ENCODE measurements at regions of chr20 and their contacts with region 1.

Region 1: DNA sequence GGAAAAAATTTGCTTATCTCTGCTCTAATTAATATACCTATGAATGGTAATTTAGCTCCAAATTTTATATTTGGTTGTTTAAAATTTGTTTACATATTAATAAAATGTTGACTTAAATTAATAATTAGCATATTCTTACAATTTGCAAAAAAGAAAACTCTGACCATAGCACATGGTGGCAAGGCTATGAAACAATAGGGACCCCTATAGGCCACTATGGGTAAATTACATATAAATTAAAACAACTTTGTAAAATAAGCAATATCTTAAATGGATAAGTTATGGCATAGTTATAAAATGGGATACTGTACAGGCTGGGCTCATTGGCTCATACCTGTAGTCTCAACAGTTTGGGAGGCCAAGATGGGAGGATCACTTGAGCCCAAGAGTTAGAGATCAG is 76.0 kb downstream of the MKKS start:
- DNase-seq: no peak
- ATAC-seq: no peak
- H3K4me3 ChIP-seq: no peak overlapping the region
- H3K27ac ChIP-seq: no peak overlapping the region
- H3K4me1 ChIP-seq: peaks cover 0 to 15% (median 7%) of the 10 kb centered on the region in 9 donors
- H3K27me3 ChIP-seq: peaks cover 0 to 1% (median 0%) of the 10 kb centered on the region in 7 donors
- CTCF ChIP-seq: peak in 7 of 9 donors; percentile 18 to 46 (median 24)

Region 2: DNA sequence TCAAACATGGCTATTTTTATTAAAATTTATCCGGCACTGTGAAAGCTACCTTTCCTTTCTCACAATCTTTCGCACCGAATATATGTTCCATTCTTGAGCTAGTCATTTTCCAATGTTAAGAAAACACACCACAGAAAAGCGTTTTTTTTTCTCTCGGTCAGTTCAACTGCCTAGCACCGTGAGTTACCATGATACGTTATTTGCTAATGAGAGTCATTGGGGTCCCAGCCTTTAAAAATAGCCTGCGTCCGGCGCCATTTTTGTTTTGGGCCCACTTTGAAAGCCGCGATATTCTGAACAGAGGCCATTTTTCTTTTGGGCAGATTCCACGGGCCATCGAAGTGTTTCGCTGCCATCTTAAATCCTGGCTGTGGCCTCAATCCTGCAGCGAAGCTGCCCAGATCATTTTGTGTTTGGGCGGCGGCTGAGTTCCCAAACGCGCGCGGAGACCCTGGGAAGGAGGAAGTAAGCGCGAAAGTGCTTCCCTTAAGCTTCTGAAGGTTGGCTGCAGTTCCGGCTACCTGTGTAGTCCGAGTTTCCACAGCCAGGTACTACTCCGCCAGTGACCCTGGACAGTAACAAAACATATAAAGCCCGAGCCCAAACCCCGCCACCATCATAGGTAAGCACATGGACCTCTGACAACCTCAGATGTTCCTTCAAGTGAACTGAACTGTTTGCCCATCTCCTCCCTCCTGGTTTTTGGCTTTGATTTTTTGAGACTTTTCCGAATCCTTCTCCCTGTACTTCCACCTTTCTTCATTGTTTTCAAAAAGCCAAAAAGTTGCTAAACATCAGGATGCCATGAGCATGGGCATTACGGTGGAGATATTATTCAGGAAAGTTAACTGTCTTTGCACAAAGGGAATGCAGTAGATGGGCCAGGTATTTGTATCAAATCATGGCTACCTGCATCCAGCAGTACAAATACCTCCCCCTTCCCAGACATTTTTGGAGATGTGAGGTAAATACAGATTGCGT is 77.1 kb after region 1 on chr20 and contains the start of gene SLX4IP:
- intact Hi-C with region 1: loop called in 1 of 10 experiments (anchors 5 kb)
- DNase-seq: peak; percentile 85 to 97
- ATAC-seq: peak; percentile 81 to 92 (median 88)
- H3K4me3 ChIP-seq: peak within 1 kb of the TSS; percentile 51 to 94 (median 86)
- H3K27ac ChIP-seq: peak within 1 kb of the TSS; percentile 54 to 97 (median 94)
- H3K4me1 ChIP-seq: peaks cover 6 to 41% (median 37%) of the 10 kb centered on the region in 9 donors
- H3K27me3 ChIP-seq: no peaks in the 10 kb centered on the region
- CTCF ChIP-seq: no peak
- total RNA-seq, gene SLX4IP: 1.6 to 3.1 (median 2.6) TPM

Region 3: GRCh38 chr20:10469599-10469998 is 111.6 kb after region 1 on chr20:
- intact Hi-C with region 1: no loop called
- DNase-seq: peak in 1 of 2 donors; percentile 61
- ATAC-seq: peak in 7 of 8 donors; percentile 44 to 81 (median 75)
- H3K4me3 ChIP-seq: no peak overlapping the region
- H3K27ac ChIP-seq: peak overlapping the region in 2 of 10 donors; percentile 3 to 29
- H3K4me1 ChIP-seq: peaks cover 0 to 60% (median 51%) of the 10 kb centered on the region in 9 donors
- H3K27me3 ChIP-seq: no peaks in the 10 kb centered on the region
- CTCF ChIP-seq: peak; percentile 38 to 80 (median 69)

Region 4: DNA sequence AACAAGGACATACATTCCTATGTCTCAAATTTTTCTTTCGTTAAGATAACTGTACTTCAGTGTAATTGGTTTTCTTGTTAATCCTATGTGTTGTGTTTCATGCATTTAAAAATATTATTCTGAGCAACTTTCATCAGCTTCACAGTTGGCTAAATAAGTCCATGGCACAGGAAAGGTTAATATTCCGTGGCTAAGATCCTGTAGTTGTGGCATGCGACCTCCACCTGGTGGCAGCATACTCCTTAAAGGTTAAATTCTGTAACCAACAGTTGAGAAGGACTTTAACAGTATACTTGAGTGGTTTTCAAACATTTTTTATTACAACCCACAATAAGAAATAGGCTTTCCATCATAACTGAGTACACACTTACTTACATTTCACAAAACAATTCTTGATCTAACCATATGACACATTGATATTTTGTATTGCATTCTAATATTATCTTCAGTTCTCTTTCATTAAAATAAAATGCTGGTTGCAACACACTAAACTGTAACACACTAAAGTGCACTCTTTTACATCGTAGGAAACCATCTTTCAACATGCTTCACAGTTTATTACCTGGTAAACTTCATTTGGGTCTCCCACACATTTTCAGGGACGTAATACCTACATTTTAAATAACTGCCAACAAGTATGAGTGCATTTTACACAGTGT is 195.5 kb after region 1 on chr20:
- intact Hi-C with region 1: no loop called
- DNase-seq: peak; percentile 55 to 77
- ATAC-seq: peak in 7 of 8 donors; percentile 45 to 79 (median 73)
- H3K4me3 ChIP-seq: no peak overlapping the region
- H3K27ac ChIP-seq: no peak overlapping the region
- H3K4me1 ChIP-seq: peaks cover 0 to 38% (median 14%) of the 10 kb centered on the region in 9 donors
- H3K27me3 ChIP-seq: no peaks in the 10 kb centered on the region
- CTCF ChIP-seq: peak; percentile 65 to 90 (median 82)

Region 5: DNA sequence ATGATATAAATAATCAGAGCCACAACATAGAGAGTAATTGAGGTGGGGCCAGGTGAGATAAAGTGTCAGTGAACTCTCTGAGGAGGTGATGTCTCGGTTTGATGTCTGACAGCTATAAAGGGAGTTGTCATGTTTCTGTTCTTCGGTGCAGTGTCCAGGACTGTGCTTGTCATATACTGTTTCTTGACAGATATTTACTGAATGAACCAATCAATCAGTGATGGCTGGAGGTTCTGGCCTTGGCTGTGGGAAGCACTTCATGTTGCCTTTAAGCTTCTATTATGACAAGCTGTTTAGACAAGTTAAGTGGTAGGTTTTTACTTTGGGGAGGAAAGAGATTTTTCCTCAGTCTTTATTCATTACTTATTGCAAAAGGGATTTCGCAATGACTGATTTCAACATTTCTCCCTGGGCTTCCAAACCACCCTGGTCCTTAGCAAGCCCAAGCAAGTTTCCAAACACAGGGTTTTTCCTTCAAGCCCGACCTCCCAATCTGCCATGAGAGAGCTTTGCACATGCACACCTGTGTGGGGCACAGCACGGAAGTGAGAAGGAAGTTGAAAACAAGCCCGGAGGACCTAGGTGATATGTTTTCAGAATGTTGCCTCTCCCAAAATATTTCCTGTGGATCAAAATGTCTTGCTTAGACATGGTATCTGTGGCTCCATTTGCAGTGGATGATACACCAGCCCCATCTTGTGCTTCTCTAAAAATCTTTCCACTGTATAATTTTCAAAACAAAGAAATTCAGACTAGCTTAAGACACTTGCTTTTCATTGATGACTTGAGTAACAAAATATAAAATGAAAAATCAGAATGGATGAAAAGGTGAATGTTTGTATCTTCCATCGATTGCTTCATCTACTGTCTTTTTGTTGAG is 992.4 kb after region 1 on chr20:
- intact Hi-C with region 1: no loop called
- DNase-seq: no peak
- ATAC-seq: peak in 2 of 8 donors; percentile 33 to 55
- H3K4me3 ChIP-seq: no peak overlapping the region
- H3K27ac ChIP-seq: no peak overlapping the region
- H3K4me1 ChIP-seq: peaks cover 0 to 6% (median 0%) of the 10 kb centered on the region in 9 donors
- H3K27me3 ChIP-seq: no peaks in the 10 kb centered on the region
- CTCF ChIP-seq: no peak

Measured in heart right ventricle (tissue), 16 donors.